ENCODE measurements at regions of chrX and their contacts with region 1.

Region 1: GRCh38 chrX:147476008-147476407 is 435.7 kb upstream of the FMR1 start:
- DNase-seq: peak; percentile 15
- H3K4me3 Mint-ChIP-seq: no peak overlapping the region
- H3K27ac Mint-ChIP-seq: no peak overlapping the region
- H3K4me1 Mint-ChIP-seq: no peaks in the 10 kb centered on the region
- H3K27me3 Mint-ChIP-seq: no peaks in the 10 kb centered on the region

Region 2: GRCh38 chrX:147364896-147365295 is 111.1 kb before region 1 on chrX:
- CTCF ChIA-PET with region 1: no interaction called
- intact Hi-C with region 1: no loop called
- DNase-seq: no peak
- H3K4me3 Mint-ChIP-seq: no peak overlapping the region
- H3K27ac Mint-ChIP-seq: no peak overlapping the region
- H3K4me1 Mint-ChIP-seq: no peaks in the 10 kb centered on the region
- H3K27me3 Mint-ChIP-seq: no peaks in the 10 kb centered on the region

Region 3: GRCh38 chrX:147550217-147550616 is 74.2 kb after region 1 on chrX:
- CTCF ChIA-PET with region 1: no interaction called
- intact Hi-C with region 1: no loop called
- DNase-seq: peak; percentile 9
- H3K4me3 Mint-ChIP-seq: no peak overlapping the region
- H3K27ac Mint-ChIP-seq: no peak overlapping the region
- H3K4me1 Mint-ChIP-seq: no peaks in the 10 kb centered on the region
- H3K27me3 Mint-ChIP-seq: no peaks in the 10 kb centered on the region

Region 4: DNA sequence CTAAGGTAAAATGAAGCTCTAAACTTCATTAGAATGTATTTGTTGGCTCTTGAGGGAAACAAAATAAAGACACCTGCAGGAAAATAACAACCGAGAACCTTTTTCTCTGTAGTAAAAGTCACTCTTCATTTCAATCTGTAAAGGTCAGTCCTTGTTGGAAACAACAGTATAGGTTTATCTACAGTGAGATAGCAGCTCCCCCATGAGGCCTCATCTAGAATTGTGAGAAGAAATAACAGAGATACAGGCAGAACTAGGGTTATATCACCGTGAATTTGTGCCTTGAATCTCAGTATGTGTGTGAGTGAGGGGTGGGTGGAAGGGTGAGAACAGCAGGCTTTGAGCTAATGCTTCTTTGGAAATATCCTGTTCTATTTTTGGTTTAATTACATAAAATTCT is 327.9 kb after region 1 on chrX:
- CTCF ChIA-PET with region 1: no interaction called
- intact Hi-C with region 1: loop called (anchors 1 kb)
- DNase-seq: peak; percentile 4
- H3K4me3 Mint-ChIP-seq: no peak overlapping the region
- H3K27ac Mint-ChIP-seq: no peak overlapping the region
- H3K4me1 Mint-ChIP-seq: no peaks in the 10 kb centered on the region
- H3K27me3 Mint-ChIP-seq: no peaks in the 10 kb centered on the region

Region 5: GRCh38 chrX:147838465-147839133 is 362.6 kb after region 1 on chrX:
- CTCF ChIA-PET with region 1: interaction called, 4 read pairs
- intact Hi-C with region 1: loop called (anchors 10 kb)
- DNase-seq: no peak
- H3K4me3 Mint-ChIP-seq: no peak overlapping the region
- H3K27ac Mint-ChIP-seq: no peak overlapping the region
- H3K4me1 Mint-ChIP-seq: no peaks in the 10 kb centered on the region
- H3K27me3 Mint-ChIP-seq: no peaks in the 10 kb centered on the region